ENCODE measurements at regions of chr13 and their contacts with region 1.

Region 1: DNA sequence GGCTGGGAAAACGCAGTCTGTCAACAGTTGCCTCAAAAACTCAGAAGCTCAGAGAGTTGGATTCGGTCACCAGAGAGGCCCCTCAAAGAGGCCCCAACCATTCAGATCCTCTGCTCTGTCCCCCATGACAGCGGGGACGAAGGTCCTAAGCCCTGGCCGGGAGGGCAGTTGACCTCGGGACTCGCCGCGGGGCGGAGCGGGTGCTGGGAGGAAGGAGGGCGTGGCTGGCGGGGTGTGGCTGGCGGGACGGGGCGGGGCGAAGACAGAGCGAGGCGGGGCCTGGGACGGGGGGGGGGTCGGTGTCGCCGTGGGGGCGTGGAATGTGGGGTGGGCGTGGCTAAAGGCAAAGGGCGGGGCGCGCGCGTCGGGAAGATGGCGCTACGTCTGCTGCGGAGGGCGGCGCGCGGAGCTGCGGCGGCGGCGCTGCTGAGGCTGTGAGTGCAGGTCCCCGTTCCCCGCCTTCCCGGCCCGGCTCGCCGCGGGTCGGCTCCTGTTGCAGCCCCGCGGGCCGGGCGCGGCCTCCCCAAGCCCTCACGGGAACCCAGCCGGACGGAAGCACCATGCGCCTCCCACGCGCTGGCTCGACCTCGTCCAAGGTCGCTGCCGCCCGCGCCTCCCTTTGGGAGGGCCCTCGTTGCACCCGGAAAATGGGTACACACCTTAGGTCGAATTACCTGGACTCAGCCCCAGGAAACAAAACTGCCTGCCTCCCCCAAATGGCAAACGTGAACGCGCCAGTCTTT is 105.2 kb downstream of the TM9SF2 start:
- DNase-seq: peak; percentile 97

Region 2: GRCh38 chr13:98697791-98698190 is 908.7 kb before region 1 on chr13:
- intact Hi-C with region 1: no loop called
- DNase-seq: no peak

Region 3: DNA sequence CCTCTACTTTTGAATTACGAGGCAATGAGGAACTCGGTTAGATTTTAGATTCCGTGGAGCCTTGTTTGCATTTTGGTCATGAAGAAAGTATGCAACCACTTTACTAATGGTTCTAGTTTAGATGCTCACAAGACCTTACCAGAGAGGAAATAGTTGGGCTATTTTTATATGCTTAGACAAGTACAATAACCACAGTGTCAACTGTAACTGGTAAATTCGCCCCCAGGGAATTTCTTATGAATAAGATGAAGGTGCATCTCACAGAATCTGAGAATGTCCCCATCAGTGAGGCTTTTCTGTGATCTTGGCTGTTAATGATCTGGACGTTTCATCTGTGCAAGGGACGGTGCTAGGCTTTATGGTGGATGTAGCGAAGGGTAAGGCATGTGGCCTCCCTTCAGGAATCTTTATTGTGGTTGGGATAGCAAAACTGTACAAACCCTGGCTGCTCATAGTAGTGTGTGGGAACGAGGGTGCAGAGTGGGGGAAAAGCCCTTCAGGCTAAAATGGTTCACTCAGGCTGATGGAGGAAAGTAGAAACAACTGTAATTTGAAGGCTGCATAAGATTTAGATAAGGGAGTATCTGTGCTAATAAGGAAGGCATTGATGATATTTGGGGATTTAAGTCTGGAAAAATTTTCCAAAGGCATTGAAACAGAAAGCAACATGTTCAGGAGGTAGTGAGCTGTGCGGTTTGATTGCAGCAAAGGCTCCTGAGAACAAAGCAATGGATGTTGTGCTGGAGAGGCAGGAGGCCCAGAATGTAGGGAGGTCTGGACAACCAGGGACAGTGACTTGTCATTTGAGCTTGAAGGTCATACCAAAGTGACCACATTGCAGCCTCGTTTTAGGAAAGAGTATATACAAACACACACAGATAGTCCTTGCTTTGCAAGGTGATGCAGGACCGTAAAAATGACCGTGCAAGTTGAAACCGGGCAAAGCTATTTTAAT is 377.5 kb before region 1 on chr13:
- intact Hi-C with region 1: no loop called
- DNase-seq: no peak

Region 4: DNA sequence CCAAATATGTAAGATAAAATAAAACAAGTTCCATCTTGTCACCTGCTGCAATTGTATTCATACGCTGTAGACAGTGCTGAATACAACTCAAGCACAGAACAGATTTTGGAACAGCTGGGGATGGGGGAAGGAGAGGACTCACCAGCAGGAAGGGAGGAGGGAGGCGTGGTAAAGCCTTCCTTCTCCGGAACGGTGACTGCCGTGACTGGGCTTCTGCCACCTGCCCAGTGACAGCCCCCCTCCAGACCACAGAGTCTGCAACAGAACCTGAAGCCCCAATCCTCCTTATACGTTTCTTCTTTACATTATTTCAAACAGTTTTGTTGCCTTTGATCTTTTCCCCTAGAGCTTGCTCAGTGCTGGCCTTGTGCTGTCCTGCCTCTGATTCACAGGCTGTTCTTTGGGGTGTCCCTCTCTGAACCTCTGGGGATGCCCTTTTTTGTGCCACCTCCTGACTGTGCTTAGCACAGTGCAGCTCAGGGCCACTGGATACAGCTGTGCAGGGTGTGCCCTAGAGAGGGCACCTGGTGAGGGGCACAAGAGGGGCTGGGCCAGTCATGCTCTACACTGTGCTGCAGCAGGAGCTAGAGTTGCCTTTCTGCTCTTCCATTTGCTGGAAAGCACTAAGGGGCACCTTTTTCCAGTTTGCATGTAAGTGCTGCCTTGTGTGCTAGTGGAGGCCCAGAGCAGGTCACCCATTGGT is 152.1 kb after region 1 on chr13:
- intact Hi-C with region 1: no loop called
- DNase-seq: no peak

Region 5: GRCh38 chr13:99980201-99980823 is 373.8 kb after region 1 on chr13:
- intact Hi-C with region 1: loop called in 1 of 2 experiments (anchors 5 kb)
- DNase-seq: peak; percentile 85